Mammary epithelial cell (primary cell): ENCODE measurements at regions of chrX and their contacts with region 1.

Region 1: GRCh38 chrX:69032601-69033000 is 132.7 kb downstream of the PJA1 start:
- DNase-seq: peak; percentile 84
- H3K4me3 ChIP-seq: no peak overlapping the region
- H3K27ac ChIP-seq: peak overlapping the region; percentile 82
- H3K4me1 ChIP-seq: peaks cover 41% of the 10 kb centered on the region
- H3K27me3 ChIP-seq: no peaks in the 10 kb centered on the region
- CTCF ChIP-seq: peak in 1 of 2 donors; percentile 41

Region 2: GRCh38 chrX:68292471-68292870 is 740.1 kb before region 1 on chrX:
- CTCF ChIA-PET with region 1: no interaction called
- dilution Hi-C with region 1: no loop called
- in situ Hi-C with region 1: no loop called
- intact Hi-C with region 1: no loop called
- DNase-seq: peak; percentile 63
- H3K4me3 ChIP-seq: no peak overlapping the region
- H3K27ac ChIP-seq: no peak overlapping the region
- H3K4me1 ChIP-seq: no peaks in the 10 kb centered on the region
- H3K27me3 ChIP-seq: no peaks in the 10 kb centered on the region
- CTCF ChIP-seq: no peak

Region 3: GRCh38 chrX:69060631-69061408 is 28.2 kb after region 1 on chrX:
- CTCF ChIA-PET with region 1: no interaction called
- dilution Hi-C with region 1: no loop called
- in situ Hi-C with region 1: no loop called
- intact Hi-C with region 1: loop called (anchors 1 kb)
- DNase-seq: peak; percentile 36
- H3K4me3 ChIP-seq: no peak overlapping the region
- H3K27ac ChIP-seq: no peak overlapping the region
- H3K4me1 ChIP-seq: no peaks in the 10 kb centered on the region
- H3K27me3 ChIP-seq: no peaks in the 10 kb centered on the region
- CTCF ChIP-seq: peak in 1 of 2 donors; percentile 48